PC-9 (cell line): ENCODE measurements at regions of chr13 and their contacts with region 1.

Region 1: GRCh38 chr13:110593430-110594130 is 21.8 kb upstream of the NAXD start:
- DNase-seq: peak in 1 of 2 experiments; percentile 59
- H3K4me3 ChIP-seq: no peak overlapping the region
- H3K27ac ChIP-seq: no peak overlapping the region
- H3K4me1 ChIP-seq: peaks cover 33% of the 10 kb centered on the region
- H3K27me3 ChIP-seq: no peaks in the 10 kb centered on the region
- CTCF ChIP-seq: peak; percentile 78

Region 2: DNA sequence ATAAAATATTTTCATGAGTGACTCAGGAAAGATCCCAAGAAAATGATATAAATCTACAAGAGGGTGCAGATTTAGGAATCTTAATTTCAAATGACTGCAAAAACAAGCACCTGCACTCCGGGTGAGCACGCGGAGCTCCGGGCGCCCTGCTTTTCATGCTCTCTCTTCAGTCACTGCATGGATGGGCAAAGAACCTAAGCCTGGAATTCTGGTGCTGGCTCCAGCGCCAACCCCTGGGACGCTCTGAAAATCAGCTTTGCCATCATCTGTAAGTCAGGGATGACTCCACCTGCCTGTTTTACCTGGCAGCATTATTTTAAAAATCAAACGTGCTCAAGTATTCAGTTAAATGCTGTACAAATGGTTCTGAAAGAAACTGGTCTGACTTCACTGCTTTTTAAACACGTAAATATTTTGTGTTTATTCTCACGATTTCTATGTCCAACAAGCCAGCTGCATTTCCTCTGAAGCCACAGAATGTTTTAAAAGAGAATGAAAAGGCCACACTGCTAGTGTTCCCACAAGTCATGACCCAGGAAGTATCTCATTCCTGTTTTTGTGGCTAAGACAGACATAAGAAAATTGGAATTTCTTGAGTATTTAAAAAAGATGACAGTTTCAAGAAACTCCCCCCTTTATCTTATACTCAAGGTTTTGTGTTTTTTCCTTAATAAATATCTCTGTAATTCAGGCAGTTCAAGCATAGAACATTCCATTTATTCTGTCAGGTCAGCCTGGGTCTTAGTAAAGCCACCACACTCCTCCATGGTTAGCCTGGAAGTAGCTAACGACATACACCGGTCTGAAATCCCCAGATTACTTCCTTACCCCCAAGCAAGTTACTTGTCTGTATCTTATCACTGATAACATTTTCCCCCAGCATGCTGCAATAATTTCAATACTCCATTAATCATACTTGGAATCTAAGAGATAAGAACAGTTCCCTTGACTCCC is 367.7 kb before region 1 on chr13:
- CTCF ChIA-PET with region 1: no interaction called
- POLR2A ChIA-PET with region 1: no interaction called
- intact Hi-C with region 1: loop called (anchors 10 kb)
- DNase-seq: peak in 1 of 2 experiments; percentile 94
- H3K4me3 ChIP-seq: no peak overlapping the region
- H3K27ac ChIP-seq: peak overlapping the region; percentile 60
- H3K4me1 ChIP-seq: peaks cover 29% of the 10 kb centered on the region
- H3K27me3 ChIP-seq: no peaks in the 10 kb centered on the region
- CTCF ChIP-seq: no peak

Region 3: GRCh38 chr13:110615322-110616102 is 21.9 kb after region 1 on chr13 and contains the start of gene NAXD:
- CTCF ChIA-PET with region 1: interaction called, 3 read pairs
- POLR2A ChIA-PET with region 1: interaction called, 4 read pairs
- intact Hi-C with region 1: loop called (anchors 1 kb)
- DNase-seq: peak; percentile 88 to 89
- H3K4me3 ChIP-seq: peak within 1 kb of the TSS; percentile 90
- H3K27ac ChIP-seq: peak within 1 kb of the TSS; percentile 65
- H3K4me1 ChIP-seq: peaks cover 28% of the 10 kb centered on the region
- H3K27me3 ChIP-seq: no peaks in the 10 kb centered on the region
- CTCF ChIP-seq: peak; percentile 7; the same call in 1 of the 2 replicates
- total RNA-seq, gene NAXD: 30.2 and 35.2 TPM in 2 replicates

Region 4: DNA sequence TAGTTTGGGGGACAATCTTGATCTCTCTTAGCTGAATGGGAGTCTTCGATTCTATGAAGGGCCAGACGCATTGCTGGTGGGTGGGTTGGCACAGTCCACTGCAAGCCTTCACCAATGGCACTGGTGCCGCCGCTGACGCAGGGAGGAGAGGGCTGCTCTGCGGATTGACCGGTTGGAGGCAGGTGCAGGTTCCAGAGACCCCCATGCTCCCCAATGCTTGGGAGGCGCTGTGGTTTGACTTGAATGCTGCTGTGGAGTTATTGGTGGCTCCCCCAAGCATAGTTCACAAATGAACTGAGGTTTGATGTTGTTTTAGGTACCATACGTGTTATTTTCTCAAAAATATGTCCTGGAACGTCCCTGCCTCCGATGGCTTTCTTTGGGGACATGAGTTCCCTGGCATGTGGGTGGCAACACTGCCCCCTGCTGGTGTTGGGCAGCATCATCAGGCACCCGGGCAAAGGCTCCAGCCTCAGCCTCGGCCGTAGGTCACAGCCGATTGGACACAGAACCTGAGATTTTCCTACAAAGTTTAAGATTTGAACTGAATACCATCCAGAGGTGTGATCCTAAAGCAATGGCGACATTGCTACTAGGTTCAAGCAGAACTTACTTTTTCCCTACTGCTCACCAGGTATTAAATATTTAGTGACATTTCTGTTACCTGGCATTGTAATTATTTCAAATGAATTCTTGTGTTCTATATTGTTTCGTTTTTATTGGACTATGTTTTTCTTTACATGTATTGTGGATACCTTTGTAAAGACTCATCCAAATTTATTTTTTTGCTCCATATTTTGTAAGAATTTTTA is 225.8 kb after region 1 on chr13:
- CTCF ChIA-PET with region 1: no interaction called
- POLR2A ChIA-PET with region 1: no interaction called
- intact Hi-C with region 1: loop called (anchors 1 kb)
- DNase-seq: peak; percentile 62 to 72
- H3K4me3 ChIP-seq: no peak overlapping the region
- H3K27ac ChIP-seq: no peak overlapping the region
- H3K4me1 ChIP-seq: peaks cover 18% of the 10 kb centered on the region; the same call in 1 of the 2 replicates
- H3K27me3 ChIP-seq: no peaks in the 10 kb centered on the region
- CTCF ChIP-seq: peak; percentile 99

Region 5: DNA sequence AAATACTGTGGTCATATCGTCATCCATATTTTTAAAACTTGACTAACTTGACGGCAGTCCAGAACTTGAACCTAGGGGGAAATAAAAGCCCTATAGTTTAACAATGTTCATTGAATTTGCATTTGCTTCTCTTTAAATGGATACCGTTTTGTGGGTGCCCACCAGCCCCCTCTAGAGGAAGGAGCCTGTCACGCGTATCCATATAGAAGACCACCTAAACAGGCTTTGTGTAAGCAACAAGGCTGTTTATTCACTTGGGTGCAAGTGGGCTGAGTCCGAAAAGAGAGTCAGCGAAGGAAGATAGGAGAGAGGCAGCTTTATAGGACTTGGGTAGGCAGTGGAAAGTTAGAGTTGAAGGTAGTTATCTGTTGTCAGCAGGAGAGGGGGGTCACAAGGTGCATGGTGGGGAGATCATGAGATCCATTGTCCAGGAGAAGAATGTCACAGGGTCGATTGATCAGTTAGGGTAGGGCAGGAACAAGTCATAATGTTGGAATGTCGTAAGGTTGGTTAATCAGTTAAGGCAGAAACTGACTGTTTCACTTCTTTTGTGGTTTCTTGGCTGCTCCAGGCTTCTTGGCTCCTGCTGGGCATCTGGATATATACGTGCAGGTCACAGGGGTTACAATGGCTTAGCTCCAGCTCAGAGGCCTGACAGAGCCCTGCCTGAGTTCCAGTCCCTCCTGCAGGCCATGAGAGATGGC is 363.8 kb after region 1 on chr13:
- CTCF ChIA-PET with region 1: no interaction called
- POLR2A ChIA-PET with region 1: no interaction called
- intact Hi-C with region 1: no loop called
- DNase-seq: peak in 1 of 2 experiments; percentile 77
- H3K4me3 ChIP-seq: no peak overlapping the region
- H3K27ac ChIP-seq: peak overlapping the region; percentile 70
- H3K4me1 ChIP-seq: peaks cover 17% of the 10 kb centered on the region
- H3K27me3 ChIP-seq: no peaks in the 10 kb centered on the region
- CTCF ChIP-seq: peak; percentile 39; the same call in 1 of the 2 replicates

Region 6: DNA sequence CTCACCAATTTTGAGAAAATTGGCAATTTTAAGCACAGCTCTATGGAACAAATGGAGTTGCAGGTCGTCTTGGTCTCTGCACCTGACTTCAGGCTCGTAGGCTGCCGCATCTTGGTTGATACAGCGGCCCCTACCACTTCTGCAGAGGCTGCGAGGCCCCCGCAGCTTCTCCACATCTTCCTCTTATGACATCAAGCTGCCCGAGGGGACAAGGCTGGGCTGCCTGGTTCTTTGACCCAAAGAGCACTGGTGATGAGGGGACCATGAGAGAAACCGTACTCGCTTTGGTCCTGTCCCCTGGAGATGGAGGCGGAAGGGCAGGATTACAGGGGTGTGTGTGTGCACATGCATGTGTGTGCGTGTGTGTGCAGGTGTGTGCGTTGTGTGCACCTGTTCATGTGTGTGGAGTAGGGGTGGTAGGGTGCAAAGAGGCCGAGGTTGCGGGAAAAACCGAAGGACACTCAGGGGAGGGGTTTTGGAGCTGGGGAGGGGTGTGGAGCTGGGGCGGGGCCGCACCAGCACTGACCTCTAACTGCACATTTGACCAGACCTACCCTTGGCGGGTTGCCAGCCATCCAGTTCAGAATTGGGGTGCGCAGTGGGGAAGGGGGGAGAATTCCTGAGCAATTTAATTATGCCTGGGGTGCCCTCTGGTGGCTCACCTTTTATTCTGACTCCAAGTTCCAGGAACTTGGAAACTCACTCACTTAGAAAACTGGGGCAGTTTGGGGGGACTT is 456.4 kb after region 1 on chr13:
- CTCF ChIA-PET with region 1: no interaction called
- POLR2A ChIA-PET with region 1: no interaction called
- intact Hi-C with region 1: loop called (anchors 5 kb)
- DNase-seq: peak in 1 of 2 experiments; percentile 32
- H3K4me3 ChIP-seq: no peak overlapping the region
- H3K27ac ChIP-seq: no peak overlapping the region
- H3K4me1 ChIP-seq: no peaks in the 10 kb centered on the region
- H3K27me3 ChIP-seq: no peaks in the 10 kb centered on the region
- CTCF ChIP-seq: peak; percentile 80